MCF 10A (cell line): ENCODE measurements at regions of chr2 and their contacts with region 1.

Region 1: GRCh38 chr2:169069341-169069740 is at the start of gene DHRS9:
- DNase-seq: peak; percentile 97
- H3K4me3 Mint-ChIP-seq: no peak within 1 kb of the TSS
- H3K27ac Mint-ChIP-seq: peak within 1 kb of the TSS; percentile 53
- H3K4me1 Mint-ChIP-seq: peaks cover 16% of the 10 kb centered on the region
- H3K27me3 Mint-ChIP-seq: no peaks in the 10 kb centered on the region
- CTCF ChIP-seq: no peak
- total RNA-seq, gene DHRS9: 0.21 TPM in 1 of 2 replicates, not detected in the other

Region 2: DNA sequence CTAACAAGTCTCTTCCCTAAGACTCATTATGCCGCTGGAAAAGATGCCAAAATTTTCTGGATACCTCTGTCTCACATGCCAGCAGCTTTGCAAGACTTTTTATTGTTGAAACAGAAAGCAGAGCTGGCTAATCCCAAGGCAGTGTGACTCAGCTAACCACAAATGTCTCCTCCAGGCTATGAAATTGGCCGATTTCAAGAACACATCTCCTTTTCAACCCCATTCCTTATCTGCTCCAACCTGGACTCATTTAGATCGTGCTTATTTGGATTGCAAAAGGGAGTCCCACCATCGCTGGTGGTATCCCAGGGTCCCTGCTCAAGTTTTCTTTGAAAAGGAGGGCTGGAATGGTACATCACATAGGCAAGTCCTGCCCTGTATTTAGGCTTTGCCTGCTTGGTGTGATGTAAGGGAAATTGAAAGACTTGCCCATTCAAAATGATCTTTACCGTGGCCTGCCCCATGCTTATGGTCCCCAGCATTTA is 26.3 kb after region 1 on chr2:
- CTCF ChIA-PET with region 1: interaction called, 3 read pairs
- POLR2A ChIA-PET with region 1: interaction called, 17 read pairs
- intact Hi-C with region 1: no loop called
- DNase-seq: peak; percentile 99
- H3K4me3 Mint-ChIP-seq: peak overlapping the region; percentile 52
- H3K27ac Mint-ChIP-seq: peak overlapping the region; percentile 3
- H3K4me1 Mint-ChIP-seq: peaks cover 45% of the 10 kb centered on the region
- H3K27me3 Mint-ChIP-seq: no peaks in the 10 kb centered on the region
- CTCF ChIP-seq: no peak